ENCODE measurements at regions of chr3 and their contacts with region 1.

Region 1: DNA sequence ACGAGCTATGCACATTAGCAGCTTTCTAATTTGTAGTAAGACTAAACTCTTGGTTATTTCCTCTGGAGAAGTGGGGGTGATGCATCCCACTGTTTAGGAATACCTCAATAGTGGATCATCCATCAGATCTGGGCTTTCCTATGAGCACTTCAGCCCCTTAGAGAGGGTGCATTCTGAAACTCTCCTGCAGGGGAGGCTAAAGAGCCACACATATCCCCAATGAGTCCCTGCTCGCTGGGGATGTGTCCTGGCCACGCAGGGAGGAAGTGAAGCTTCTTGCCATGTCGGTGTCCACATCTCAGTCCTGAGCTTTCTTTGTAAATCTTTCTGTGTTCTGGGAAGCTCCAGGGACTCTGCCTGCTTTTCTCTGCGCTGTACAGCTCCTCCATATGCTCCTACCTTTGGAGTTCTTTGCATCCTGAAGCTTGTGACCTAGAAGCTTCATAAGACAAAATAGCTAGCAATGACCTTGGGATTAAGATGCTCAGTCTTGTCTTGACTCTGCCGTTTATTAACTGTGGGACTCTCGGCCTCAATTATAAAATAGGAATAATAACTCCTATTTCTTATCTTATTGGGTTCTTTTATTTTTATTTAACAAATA is 28.3 kb upstream of the MASP1 start:
- DNase-seq: peak; percentile 82
- H3K4me3 Mint-ChIP-seq: no peak overlapping the region
- H3K27ac Mint-ChIP-seq: no peak overlapping the region
- H3K4me1 Mint-ChIP-seq: peaks cover 7% of the 10 kb centered on the region
- H3K27me3 Mint-ChIP-seq: peaks cover 21% of the 10 kb centered on the region

Region 2: DNA sequence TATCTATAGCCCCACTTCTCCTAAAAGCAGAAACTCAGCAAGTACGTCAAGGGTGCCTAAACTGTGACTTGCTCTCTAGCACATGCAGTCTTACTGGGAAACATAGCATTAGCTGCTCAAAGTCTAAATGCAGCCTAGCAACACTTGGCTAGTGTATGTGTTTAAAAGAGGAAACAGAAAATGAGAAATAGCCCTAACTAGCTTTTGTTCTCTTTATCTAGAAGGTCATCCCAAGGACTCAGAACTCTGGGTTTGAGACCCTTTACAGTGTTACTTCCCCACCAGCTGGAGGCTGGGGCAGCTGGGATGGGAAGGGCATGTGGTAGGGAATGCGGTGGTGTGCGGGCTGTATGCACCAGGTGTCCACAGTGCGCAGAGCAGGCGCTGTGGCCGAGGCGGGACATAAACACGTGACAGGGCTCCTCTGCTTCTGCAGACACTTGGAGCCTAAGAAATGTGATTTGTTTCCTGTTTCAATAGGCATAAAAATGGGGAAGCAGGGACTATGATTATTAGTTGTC is 1224.2 kb before region 1 on chr3:
- CTCF ChIA-PET with region 1: no interaction called
- intact Hi-C with region 1: no loop called
- DNase-seq: no peak
- H3K4me3 Mint-ChIP-seq: no peak overlapping the region
- H3K27ac Mint-ChIP-seq: no peak overlapping the region
- H3K4me1 Mint-ChIP-seq: peaks cover 9% of the 10 kb centered on the region
- H3K27me3 Mint-ChIP-seq: peaks cover 57% of the 10 kb centered on the region

Region 3: GRCh38 chr3:187112934-187113793 is 206.6 kb before region 1 on chr3:
- CTCF ChIA-PET with region 1: interaction called, 4 read pairs
- intact Hi-C with region 1: loop called (anchors 1 kb)
- DNase-seq: no peak
- H3K4me3 Mint-ChIP-seq: no peak overlapping the region
- H3K27ac Mint-ChIP-seq: no peak overlapping the region
- H3K4me1 Mint-ChIP-seq: peaks cover 7% of the 10 kb centered on the region
- H3K27me3 Mint-ChIP-seq: no peaks in the 10 kb centered on the region

Region 4: GRCh38 chr3:187305881-187306280 is 13.9 kb before region 1 on chr3:
- CTCF ChIA-PET with region 1: interaction called, 24 read pairs
- intact Hi-C with region 1: no loop called
- DNase-seq: no peak
- H3K4me3 Mint-ChIP-seq: no peak overlapping the region
- H3K27ac Mint-ChIP-seq: no peak overlapping the region
- H3K4me1 Mint-ChIP-seq: no peaks in the 10 kb centered on the region
- H3K27me3 Mint-ChIP-seq: peaks cover 7% of the 10 kb centered on the region

Region 5: GRCh38 chr3:187662848-187663409 is 343.1 kb after region 1 on chr3:
- CTCF ChIA-PET with region 1: interaction called, 21 read pairs
- intact Hi-C with region 1: no loop called
- DNase-seq: no peak
- H3K4me3 Mint-ChIP-seq: no peak overlapping the region
- H3K27ac Mint-ChIP-seq: no peak overlapping the region
- H3K4me1 Mint-ChIP-seq: peaks cover 9% of the 10 kb centered on the region
- H3K27me3 Mint-ChIP-seq: peaks cover 36% of the 10 kb centered on the region

Region 6: GRCh38 chr3:187706971-187707370 is 387.2 kb after region 1 on chr3:
- CTCF ChIA-PET with region 1: interaction called, 19 read pairs
- intact Hi-C with region 1: no loop called
- DNase-seq: no peak
- H3K4me3 Mint-ChIP-seq: no peak overlapping the region
- H3K27ac Mint-ChIP-seq: no peak overlapping the region
- H3K4me1 Mint-ChIP-seq: no peaks in the 10 kb centered on the region
- H3K27me3 Mint-ChIP-seq: no peaks in the 10 kb centered on the region

Region 7: DNA sequence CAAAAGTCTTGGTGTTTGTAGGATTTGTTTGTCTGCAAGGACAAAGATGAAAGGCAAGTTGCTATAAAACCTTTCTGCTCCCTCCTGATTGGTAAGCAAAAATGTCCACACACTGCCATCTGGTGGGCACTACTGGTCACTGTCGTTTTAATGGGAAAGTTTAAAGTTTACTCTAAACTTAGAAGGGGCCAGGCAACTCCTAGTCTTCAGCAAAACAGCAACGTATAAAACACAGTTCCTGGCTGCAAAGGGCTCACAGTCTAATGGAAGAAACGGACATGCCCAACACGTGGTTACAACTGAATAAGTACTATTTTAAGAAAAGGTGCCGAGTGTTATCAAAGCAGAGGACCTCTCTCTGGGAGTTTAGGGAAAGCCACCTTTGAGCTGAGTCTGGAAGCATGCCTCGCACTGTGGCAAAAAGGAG is 1828.3 kb after region 1 on chr3:
- CTCF ChIA-PET with region 1: no interaction called
- intact Hi-C with region 1: loop called (anchors 2 kb)
- DNase-seq: peak; percentile 85
- H3K4me3 Mint-ChIP-seq: no peak overlapping the region
- H3K27ac Mint-ChIP-seq: no peak overlapping the region
- H3K4me1 Mint-ChIP-seq: peaks cover 9% of the 10 kb centered on the region
- H3K27me3 Mint-ChIP-seq: peaks cover 9% of the 10 kb centered on the region